ENCODE measurements at regions of chr1 and their contacts with region 1.

Region 1: DNA sequence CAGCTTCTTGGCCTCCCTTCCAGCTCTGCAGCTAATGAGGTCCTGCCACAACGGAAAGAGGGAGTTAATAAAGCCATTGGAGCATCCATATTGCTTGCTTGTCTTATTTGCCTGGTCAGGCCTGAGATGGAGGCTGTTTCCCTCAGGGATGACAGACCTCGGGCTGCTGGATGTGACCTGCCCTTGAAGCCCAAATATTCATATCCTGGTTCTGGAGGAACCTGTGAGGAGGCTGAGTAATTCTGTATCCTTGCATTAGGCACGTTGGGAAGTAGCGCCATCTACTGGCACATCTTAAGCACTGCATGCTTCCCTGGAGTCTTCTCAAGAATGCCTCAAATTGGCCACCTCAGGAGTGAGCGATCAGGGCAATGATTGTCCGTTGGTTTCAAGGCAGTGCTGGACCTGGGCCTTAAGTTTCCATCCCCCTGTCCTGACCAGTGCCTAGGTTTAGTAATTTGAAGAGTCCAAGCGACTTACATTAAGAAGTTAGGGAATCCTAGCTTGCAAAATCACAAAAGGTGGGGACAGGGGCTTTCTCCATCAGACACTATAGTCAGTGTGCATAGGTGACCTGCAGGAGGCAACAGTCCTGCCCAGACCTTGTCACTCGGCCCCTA is 13.8 kb upstream of the NASP start:
- DNase-seq: peak; percentile 88
- ATAC-seq: peak; percentile 91
- H3K4me3 ChIP-seq: no peak overlapping the region
- H3K27ac ChIP-seq: no peak overlapping the region
- H3K4me1 ChIP-seq: no peaks in the 10 kb centered on the region
- H3K27me3 ChIP-seq: no peaks in the 10 kb centered on the region
- CTCF ChIP-seq: peak; percentile 96

Region 2: DNA sequence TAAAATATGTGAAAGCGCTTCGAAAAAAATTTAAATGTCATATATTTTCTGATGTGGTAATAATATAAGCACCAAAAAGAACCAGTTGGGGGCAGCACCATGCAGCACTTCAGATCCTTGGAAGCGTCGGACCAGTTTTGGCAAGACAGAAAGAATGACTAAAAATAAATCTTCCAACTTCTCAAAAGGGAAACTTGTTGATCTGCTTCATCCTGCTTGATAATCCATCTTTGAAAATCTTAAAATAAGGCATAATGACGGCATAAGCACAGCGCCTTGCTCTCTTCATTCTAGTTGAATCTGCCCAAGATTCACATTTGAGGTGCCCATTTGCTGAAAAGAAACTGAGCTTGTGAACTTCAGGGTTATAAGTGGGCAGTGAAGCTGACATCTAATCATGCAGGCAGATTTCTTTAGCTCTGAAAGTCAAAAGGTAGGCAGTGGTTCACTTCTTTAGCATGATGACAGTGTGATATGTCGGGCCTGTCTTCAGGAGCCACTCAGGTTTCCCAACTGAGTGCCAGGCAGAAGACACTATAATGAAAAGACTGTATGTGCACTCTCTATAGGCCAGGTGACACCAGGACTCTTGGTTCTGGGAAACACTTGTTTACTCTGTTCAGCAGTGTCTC is 210.1 kb before region 1 on chr1:
- CTCF ChIA-PET with region 1: no interaction called
- POLR2A ChIA-PET with region 1: no interaction called
- intact Hi-C with region 1: loop called (anchors 1 kb)
- DNase-seq: peak; percentile 78
- ATAC-seq: peak; percentile 52
- H3K4me3 ChIP-seq: peak overlapping the region; percentile 28; the same call in 1 of the 2 replicates
- H3K27ac ChIP-seq: no peak overlapping the region
- H3K4me1 ChIP-seq: peaks cover 22% of the 10 kb centered on the region
- H3K27me3 ChIP-seq: no peaks in the 10 kb centered on the region
- CTCF ChIP-seq: peak; percentile 79

Region 3: DNA sequence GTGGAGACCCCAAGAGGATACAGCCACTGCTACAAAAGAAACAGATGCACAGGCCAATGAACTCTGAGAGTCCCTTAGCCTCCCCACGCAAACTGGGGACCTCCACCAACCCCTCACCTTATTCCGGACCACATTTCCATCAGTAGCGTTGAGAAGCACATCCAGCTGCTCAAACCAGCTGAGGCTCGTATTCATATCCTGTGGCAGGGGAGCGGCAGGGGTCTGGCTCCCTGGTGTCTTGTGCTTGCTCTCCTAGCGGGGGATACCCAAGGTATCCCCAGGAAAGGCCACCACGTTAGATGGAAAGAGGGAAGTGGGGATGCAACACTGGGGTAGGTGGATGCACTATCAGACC is 70.7 kb before region 1 on chr1:
- CTCF ChIA-PET with region 1: no interaction called
- POLR2A ChIA-PET with region 1: no interaction called
- intact Hi-C with region 1: loop called (anchors 1 kb)
- DNase-seq: no peak
- ATAC-seq: no peak
- H3K4me3 ChIP-seq: peak overlapping the region; percentile 80
- H3K27ac ChIP-seq: no peak overlapping the region
- H3K4me1 ChIP-seq: peaks cover 16% of the 10 kb centered on the region
- H3K27me3 ChIP-seq: no peaks in the 10 kb centered on the region
- CTCF ChIP-seq: no peak

Region 4: DNA sequence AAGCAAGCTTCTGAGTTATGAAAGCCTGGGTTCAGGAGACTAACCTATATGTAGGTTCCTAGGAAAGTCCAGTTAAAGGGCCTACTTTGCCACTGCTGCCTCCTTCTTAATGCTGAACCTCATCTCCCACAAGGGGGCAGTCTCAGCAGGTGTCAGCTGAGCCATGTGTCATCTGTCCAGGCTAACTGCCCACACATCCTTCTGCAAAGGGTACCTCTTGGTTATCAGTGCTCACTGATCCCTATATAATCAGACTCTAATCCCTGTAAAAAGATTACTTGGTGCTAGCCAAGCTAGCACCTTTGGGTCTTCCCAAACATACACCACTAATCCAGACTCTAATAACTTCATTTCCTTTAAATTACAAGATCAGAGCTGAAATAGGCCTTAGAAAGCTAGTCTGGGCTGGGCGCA is 57.4 kb before region 1 on chr1:
- CTCF ChIA-PET with region 1: interaction called, 5 read pairs
- POLR2A ChIA-PET with region 1: no interaction called
- intact Hi-C with region 1: loop called (anchors 1 kb)
- DNase-seq: peak; percentile 79
- ATAC-seq: peak; percentile 71
- H3K4me3 ChIP-seq: no peak overlapping the region
- H3K27ac ChIP-seq: no peak overlapping the region
- H3K4me1 ChIP-seq: peaks cover 9% of the 10 kb centered on the region
- H3K27me3 ChIP-seq: no peaks in the 10 kb centered on the region
- CTCF ChIP-seq: peak; percentile 87

Region 5: DNA sequence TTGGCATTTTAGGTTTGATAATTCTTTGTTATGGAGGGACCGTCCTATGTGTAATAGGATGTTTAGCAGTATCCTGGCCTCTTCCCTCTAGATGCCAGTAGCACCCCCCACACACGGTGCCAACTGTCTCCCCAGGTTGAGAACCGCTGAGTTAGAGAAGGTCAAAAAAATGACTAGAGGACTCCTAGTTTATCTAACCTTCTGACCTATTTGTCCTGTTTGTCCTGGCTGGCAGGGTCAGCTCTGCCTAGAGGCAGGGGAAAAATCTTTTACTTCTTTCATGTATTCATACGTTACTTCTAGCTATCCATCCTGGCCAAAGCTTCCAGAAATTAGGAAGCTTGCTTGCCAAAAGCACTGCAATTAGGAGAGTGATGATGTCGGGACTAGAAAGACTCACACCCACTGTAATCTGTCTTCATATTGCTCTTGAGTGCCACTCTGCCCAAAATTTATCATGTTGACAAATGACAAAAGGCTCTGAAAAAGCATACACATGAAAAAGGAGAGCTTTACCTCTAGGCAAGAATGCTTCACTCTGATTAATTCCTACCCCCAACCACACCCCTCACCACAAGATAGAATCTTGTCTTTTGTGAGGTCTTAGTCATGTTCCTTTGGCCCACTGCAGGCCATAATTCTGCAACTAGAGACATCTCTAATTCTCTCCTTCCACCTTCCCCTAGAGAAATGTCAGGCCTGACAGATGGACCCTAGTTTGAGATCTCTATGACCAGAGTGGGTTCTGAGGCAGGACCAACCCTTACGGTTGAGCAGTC is 33.9 kb before region 1 on chr1:
- CTCF ChIA-PET with region 1: no interaction called
- POLR2A ChIA-PET with region 1: no interaction called
- intact Hi-C with region 1: no loop called
- DNase-seq: peak; percentile 54
- ATAC-seq: peak; percentile 91
- H3K4me3 ChIP-seq: no peak overlapping the region
- H3K27ac ChIP-seq: no peak overlapping the region
- H3K4me1 ChIP-seq: peaks cover 17% of the 10 kb centered on the region
- H3K27me3 ChIP-seq: no peaks in the 10 kb centered on the region
- CTCF ChIP-seq: no peak